Endothelial cell of umbilical vein (primary cell): ENCODE measurements at regions of chr2 and their contacts with region 1.

Region 1: DNA sequence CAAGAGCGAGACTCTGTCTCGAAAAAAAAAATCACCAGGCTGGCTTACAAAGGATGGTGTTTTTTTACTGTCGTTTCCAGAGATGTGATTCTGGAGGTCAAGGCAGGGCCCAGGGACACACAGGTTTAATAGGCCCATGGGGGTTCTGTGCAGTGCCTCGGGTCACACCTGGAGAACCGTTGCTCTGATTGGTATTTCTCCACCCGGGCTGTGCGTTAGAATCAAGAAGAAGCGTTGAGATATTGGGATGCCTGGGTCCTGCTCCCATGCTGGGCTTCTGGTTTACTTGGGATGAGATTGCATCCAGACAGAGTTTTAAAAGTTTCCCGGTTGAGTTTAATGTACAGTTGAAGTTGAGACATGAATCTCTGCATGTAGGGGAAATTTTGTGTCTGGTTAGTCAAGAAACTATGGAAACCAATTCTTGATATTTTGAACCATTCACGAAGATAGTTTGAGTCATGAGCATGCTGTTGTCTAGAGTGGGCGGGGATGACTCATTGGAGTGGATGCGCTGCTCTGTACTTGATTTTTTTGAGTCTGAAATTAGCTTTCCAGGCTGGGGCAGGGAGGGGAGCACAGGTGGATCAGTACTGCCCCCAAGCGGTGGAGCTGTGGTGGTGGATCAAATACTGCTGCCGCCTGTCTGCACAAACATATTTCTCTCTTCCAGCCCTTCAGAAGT is 50.1 kb downstream of the GREB1 start:
- DNase-seq: peak; percentile 87
- H3K4me3 ChIP-seq: no peak overlapping the region
- H3K27ac ChIP-seq: no peak overlapping the region
- H3K4me1 ChIP-seq: no peaks in the 10 kb centered on the region
- H3K27me3 ChIP-seq: no peaks in the 10 kb centered on the region
- CTCF ChIP-seq: peak; percentile 81 to 82
- POLR2A ChIP-seq: no peak

Region 2: DNA sequence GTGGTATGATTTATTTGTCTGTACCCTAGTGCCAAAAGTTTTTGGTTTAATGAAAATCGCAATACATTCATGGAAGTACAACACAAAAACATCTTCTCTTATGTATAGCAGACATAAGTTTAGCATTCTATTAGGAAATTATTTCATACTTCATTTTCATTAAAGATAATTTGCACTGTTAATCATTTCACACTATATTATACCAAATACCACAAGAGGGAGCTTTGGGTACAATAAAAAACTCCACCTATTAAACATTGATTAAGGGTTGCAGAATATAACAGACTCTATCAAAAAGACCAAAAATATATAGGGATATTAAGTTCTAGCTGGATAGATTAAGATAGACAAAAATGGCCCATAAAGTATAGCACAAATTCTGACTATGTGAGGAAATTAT is 349.7 kb before region 1 on chr2:
- CTCF ChIA-PET with region 1: interaction called, 14 read pairs
- POLR2A ChIA-PET with region 1: no interaction called
- dilution Hi-C with region 1: no loop called
- intact Hi-C with region 1: loop called (anchors 5 kb)
- DNase-seq: peak; percentile 46
- H3K4me3 ChIP-seq: no peak overlapping the region
- H3K27ac ChIP-seq: no peak overlapping the region
- H3K4me1 ChIP-seq: no peaks in the 10 kb centered on the region
- H3K27me3 ChIP-seq: no peaks in the 10 kb centered on the region
- CTCF ChIP-seq: peak; percentile 17 to 21
- POLR2A ChIP-seq: no peak

Region 3: GRCh38 chr2:11477994-11478393 is 106.0 kb before region 1 on chr2:
- CTCF ChIA-PET with region 1: interaction called, 247 read pairs
- POLR2A ChIA-PET with region 1: no interaction called
- dilution Hi-C with region 1: no loop called
- intact Hi-C with region 1: loop called (anchors 1 kb)
- DNase-seq: peak; percentile 69
- H3K4me3 ChIP-seq: no peak overlapping the region
- H3K27ac ChIP-seq: no peak overlapping the region
- H3K4me1 ChIP-seq: no peaks in the 10 kb centered on the region
- H3K27me3 ChIP-seq: peaks cover 25 to 41% of the 10 kb centered on the region in 2 experiments
- CTCF ChIP-seq: peak; percentile 68 to 73
- POLR2A ChIP-seq: no peak

Region 4: DNA sequence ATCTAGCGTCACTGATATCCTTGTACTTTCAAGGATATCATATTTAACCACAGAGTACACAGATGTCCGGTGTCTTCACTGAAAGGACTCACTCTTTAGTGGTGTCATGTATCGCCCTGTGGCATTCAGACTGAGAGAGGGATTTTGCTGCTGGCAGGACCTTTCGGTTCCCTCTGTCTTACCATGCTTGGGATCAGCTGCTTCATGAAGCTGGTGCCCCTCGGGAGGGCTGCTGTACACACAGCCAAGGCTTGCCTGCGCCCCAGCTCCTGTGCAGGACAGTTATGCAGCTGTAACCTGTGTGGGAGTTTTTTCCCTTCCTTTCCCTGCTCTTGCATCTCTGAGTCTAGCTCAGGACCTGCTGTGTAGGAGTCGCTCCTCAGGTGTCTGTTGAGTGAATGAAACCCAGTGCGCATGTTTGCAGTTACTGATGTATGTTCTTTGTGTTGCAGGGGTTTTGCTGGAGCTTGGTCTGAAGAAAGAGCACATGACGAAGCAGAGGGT is 14.3 kb after region 1 on chr2:
- CTCF ChIA-PET with region 1: interaction called, 17 read pairs
- POLR2A ChIA-PET with region 1: no interaction called
- dilution Hi-C with region 1: no loop called
- intact Hi-C with region 1: no loop called
- DNase-seq: no peak
- H3K4me3 ChIP-seq: no peak overlapping the region
- H3K27ac ChIP-seq: no peak overlapping the region
- H3K4me1 ChIP-seq: peaks cover 17% of the 10 kb centered on the region
- H3K27me3 ChIP-seq: peaks cover 0 to 2% of the 10 kb centered on the region in 2 experiments
- CTCF ChIP-seq: no peak
- POLR2A ChIP-seq: no peak

Region 5: GRCh38 chr2:11726384-11726783 is 142.4 kb after region 1 on chr2:
- CTCF ChIA-PET with region 1: no interaction called
- POLR2A ChIA-PET with region 1: no interaction called
- dilution Hi-C with region 1: no loop called
- intact Hi-C with region 1: no loop called
- DNase-seq: no peak
- H3K4me3 ChIP-seq: no peak overlapping the region
- H3K27ac ChIP-seq: no peak overlapping the region
- H3K4me1 ChIP-seq: no peaks in the 10 kb centered on the region
- H3K27me3 ChIP-seq: peaks cover 25 to 45% of the 10 kb centered on the region in 2 experiments
- CTCF ChIP-seq: no peak
- POLR2A ChIP-seq: no peak